ENCODE measurements at regions of chr13 and their contacts with region 1.

Region 1: GRCh38 chr13:36736119-36736726 is 62.4 kb downstream of the SERTM1 start:
- DNase-seq: peak; percentile 31
- H3K4me3 ChIP-seq: no peak overlapping the region
- H3K27ac ChIP-seq: no peak overlapping the region
- H3K4me1 ChIP-seq: no peaks in the 10 kb centered on the region
- H3K27me3 ChIP-seq: no peaks in the 10 kb centered on the region
- CTCF ChIP-seq: peak; percentile 66

Region 2: DNA sequence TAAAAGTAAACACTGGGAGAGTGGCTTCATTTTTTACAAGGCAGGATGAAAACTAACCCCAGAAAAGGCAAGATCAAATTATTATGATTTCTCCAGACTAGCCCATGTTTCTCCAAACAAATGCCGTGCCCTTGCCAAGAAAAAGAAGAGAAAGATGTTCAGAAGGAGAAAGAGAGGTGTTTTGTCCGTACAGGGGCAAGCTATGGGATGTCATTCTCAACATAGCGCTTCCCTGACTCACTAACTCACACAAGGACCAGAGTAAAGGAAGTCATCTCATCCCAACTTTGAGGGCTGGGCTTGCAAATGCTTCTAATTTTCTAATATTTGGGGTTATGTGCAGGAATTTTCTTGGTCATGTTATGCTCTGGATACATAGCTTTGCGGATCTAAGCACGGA is 1035.6 kb before region 1 on chr13:
- intact Hi-C with region 1: no loop called
- DNase-seq: no peak
- H3K4me3 ChIP-seq: no peak overlapping the region
- H3K27ac ChIP-seq: no peak overlapping the region
- H3K4me1 ChIP-seq: no peaks in the 10 kb centered on the region
- H3K27me3 ChIP-seq: no peaks in the 10 kb centered on the region
- CTCF ChIP-seq: no peak

Region 3: GRCh38 chr13:35984776-35985453 is 751.3 kb before region 1 on chr13:
- intact Hi-C with region 1: loop called (anchors 10 kb)
- DNase-seq: no peak
- H3K4me3 ChIP-seq: no peak overlapping the region
- H3K27ac ChIP-seq: no peak overlapping the region
- H3K4me1 ChIP-seq: no peaks in the 10 kb centered on the region
- H3K27me3 ChIP-seq: no peaks in the 10 kb centered on the region
- CTCF ChIP-seq: no peak

Region 4: DNA sequence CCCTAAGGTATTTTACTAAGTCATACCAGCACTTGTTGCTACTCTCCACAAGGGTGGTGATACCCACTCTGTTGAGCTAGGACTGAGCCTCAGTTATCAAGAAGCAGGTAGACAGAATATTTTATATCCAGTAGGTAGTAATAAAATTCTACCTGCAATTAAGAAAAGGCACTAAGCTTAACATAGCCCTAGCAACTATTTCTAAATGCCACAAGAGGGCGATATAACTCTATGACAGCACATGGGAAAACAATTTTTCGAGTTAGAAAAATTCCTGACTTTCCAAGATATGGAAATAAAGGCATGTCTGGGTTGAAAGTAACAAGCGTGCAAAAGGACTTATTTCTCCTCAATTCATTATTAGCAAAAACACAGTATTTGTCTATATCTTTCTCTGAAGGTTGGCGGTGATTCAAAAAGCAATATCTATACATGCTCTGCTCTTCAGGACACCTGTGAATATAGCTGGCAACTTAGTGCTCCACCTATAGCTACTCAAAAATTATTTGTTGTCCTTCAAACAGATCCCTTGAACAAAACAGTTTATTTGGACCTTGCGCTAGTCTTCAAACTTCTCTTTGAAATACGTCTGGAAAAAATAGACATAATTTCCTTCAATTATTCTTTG is 453.3 kb before region 1 on chr13:
- intact Hi-C with region 1: loop called (anchors 5 kb)
- DNase-seq: no peak
- H3K4me3 ChIP-seq: no peak overlapping the region
- H3K27ac ChIP-seq: no peak overlapping the region
- H3K4me1 ChIP-seq: no peaks in the 10 kb centered on the region
- H3K27me3 ChIP-seq: no peaks in the 10 kb centered on the region
- CTCF ChIP-seq: peak; percentile 76

Region 5: GRCh38 chr13:36420437-36420891 is 315.8 kb before region 1 on chr13:
- intact Hi-C with region 1: loop called (anchors 5 kb)
- DNase-seq: peak; percentile 67
- H3K4me3 ChIP-seq: no peak overlapping the region
- H3K27ac ChIP-seq: no peak overlapping the region
- H3K4me1 ChIP-seq: no peaks in the 10 kb centered on the region
- H3K27me3 ChIP-seq: no peaks in the 10 kb centered on the region
- CTCF ChIP-seq: peak; percentile 66

Region 6: DNA sequence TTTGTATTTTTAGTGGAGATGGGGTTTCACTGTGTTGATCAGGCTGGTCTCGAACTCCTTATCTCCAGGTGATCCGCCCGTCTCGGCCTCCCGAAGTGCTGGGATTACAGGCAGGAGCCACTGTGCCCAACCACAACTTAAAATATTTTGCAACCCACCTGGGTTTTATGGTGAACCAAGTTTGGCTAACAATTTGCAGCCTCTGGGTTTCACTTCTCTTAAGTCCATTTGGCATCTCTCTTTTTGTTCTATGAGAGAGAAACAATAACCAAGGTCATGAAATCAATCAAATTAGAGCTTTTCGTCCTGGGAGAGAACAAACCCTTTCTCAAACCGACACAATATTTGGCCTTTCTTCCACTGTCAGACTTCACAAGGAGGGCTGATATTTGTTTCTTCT is 189.4 kb after region 1 on chr13:
- intact Hi-C with region 1: no loop called
- DNase-seq: no peak
- H3K4me3 ChIP-seq: no peak overlapping the region
- H3K27ac ChIP-seq: no peak overlapping the region
- H3K4me1 ChIP-seq: no peaks in the 10 kb centered on the region
- H3K27me3 ChIP-seq: no peaks in the 10 kb centered on the region
- CTCF ChIP-seq: no peak

Region 7: DNA sequence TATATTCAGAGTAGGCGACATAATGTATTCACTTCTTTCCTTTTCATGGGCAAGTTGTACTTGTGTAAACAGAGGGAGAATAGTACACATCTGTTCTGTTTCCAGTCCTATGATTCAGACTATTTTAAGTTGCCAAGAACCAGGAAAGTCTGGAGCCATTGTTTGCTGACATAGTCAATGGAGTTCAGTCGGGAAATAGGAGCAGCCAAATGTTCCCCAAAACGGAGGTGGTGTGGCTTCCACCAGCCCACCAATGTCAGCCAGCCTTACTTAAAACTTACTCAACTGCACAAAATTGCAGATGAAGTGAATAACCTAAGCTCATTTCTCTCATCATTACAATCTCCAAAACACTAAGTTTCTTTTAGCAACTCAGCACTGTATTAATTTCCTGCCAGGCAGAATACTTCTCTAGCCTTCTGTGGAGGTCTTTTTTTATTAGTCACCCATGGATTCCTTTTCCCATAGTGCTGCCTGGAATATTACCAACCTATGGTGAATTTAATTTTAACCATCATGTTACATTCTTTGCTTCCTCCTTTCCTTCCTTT is 391.5 kb after region 1 on chr13:
- intact Hi-C with region 1: no loop called
- DNase-seq: no peak
- H3K4me3 ChIP-seq: no peak overlapping the region
- H3K27ac ChIP-seq: no peak overlapping the region
- H3K4me1 ChIP-seq: no peaks in the 10 kb centered on the region
- H3K27me3 ChIP-seq: no peaks in the 10 kb centered on the region
- CTCF ChIP-seq: no peak

Measured in colonic mucosa (tissue), 4 donors.